Kidney (tissue), 22 donors: ENCODE measurements at regions of chr17 and their contacts with region 1.

Region 1: DNA sequence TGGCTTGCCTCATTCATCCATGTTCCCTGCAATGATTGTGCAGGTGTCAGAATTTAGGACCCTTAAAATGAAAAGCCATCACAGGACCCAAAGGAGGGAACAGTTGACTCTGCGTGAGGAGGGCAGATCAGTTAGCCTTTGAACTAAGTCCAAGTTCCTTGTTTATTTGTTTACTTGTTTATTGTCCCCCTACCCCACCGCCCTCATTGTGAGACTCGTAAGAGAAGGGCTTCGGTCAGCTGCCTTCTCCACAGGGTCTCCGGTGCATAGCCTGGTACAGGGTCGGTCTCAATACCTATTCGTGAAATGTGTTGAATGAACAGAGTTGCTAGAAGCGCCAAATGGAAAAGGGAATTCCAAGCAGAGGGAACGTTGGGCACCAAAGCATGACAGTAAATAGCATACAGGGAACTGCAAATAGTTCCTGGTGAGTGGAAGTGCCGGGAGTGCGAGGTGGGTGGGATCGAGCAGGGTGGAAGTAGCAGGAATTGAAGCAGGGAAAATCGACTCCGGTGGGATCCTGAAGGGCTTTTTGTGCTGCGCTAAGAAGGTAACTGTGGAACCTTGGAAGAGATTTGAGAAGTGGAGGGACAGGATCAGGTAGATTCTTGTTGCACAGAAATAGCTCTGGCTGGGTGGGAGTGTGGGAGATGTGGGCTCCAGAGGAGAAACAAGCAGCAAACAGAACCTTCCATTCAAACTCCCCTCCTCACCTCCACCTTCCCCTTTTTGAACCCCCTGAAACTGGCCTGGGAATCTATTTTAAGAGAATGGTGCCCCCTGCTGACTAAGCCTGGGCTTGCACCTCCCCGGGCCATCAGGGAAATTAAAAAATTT is 12.7 kb downstream of the SLC35B1 start:
- DNase-seq: peak in 3 of 5 donors; percentile 50 to 64 (median 59)
- H3K4me3 ChIP-seq: no peak overlapping the region
- H3K27ac ChIP-seq: no peak overlapping the region
- H3K4me1 ChIP-seq: no peaks in the 10 kb centered on the region
- H3K27me3 ChIP-seq: no peaks in the 10 kb centered on the region
- CTCF ChIP-seq: peak; percentile 94

Region 2: GRCh38 chr17:49574323-49574781 is 120.7 kb before region 1 on chr17:
- intact Hi-C with region 1: loop called (anchors 5 kb)
- DNase-seq: no peak
- H3K4me3 ChIP-seq: no peak overlapping the region
- H3K27ac ChIP-seq: no peak overlapping the region
- H3K4me1 ChIP-seq: peaks cover 0 to 8% (median 0%) of the 10 kb centered on the region in 3 donors
- H3K27me3 ChIP-seq: no peaks in the 10 kb centered on the region
- CTCF ChIP-seq: no peak

Region 3: DNA sequence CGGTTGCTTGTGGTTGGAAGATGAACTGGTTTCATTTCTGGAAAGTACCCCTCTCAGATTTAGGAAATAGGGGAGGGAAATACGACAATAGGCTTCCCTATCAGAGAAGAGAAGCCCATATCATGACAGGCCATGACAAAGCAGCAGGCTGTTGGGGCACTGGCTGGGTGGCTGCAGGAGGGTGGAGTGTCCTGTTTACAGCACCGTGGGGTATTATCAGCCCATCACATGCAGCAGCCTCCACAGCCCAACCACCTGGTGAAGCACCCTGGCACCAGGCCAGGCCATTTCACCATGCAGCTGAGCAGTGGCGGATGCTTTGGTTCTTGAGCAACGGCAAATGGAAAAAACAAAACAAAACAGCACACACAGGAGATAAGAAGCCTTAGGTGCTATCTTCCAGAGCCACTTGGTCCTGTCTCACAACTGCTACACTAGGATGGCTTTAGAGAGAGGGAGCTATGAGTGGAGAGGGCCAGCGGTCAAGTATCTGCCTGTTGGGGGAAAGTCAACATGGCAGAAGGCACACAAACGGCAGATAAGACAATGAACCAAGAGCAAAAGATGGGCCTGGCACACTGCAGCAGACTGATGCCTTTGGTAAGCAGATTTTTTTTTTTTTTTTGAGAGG is 44.7 kb after region 1 on chr17:
- intact Hi-C with region 1: no loop called
- DNase-seq: peak in 1 of 5 donors; percentile 93
- H3K4me3 ChIP-seq: no peak overlapping the region
- H3K27ac ChIP-seq: peak overlapping the region in 1 of 2 donors; percentile 43
- H3K4me1 ChIP-seq: peaks cover 0 to 14% (median 11%) of the 10 kb centered on the region in 3 donors
- H3K27me3 ChIP-seq: no peaks in the 10 kb centered on the region
- CTCF ChIP-seq: no peak